PC-9 (cell line): ENCODE measurements at regions of chr1 and their contacts with region 1.

Region 1: DNA sequence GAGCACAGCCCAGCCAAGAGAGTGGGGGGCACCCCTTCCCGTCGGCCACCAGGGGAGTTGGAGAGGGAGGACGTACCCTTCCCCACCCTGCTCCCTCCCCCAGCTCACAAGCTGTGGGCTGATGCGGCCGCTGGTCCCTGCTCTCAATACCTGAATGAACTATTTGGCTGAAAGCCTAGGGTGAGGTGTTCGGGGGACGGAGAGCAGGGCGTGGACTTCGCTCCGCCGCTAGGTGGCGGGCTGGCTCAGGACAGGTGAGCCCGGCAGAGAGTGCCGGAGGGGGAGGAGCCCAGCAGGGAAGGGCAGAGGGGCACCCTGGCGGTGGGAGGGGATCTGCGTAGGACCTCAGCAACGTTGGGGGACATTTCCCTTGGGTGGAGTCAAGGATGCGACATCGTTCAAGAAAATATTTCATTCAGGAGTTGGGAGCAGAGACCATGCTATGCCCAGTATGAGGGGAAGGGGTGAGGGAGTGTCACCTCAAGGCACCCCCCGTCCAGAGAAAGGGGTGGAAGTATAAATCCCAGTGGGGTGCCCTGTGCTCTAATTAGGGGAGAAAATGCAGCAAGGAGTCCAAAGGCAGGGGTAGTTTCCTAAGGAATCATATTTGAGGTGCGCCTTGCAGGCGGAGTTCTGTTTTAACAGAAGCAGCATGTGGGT is 12.0 kb upstream of the RHBG start:
- DNase-seq: peak; percentile 75
- H3K4me3 ChIP-seq: peak overlapping the region; percentile 25; the same call in 1 of the 2 replicates
- H3K27ac ChIP-seq: no peak overlapping the region
- H3K4me1 ChIP-seq: peaks cover 20% of the 10 kb centered on the region
- H3K27me3 ChIP-seq: no peaks in the 10 kb centered on the region
- CTCF ChIP-seq: peak; percentile 88

Region 2: GRCh38 chr1:156379420-156380165 is 22.6 kb after region 1 on chr1:
- CTCF ChIA-PET with region 1: interaction called, 4 read pairs
- POLR2A ChIA-PET with region 1: no interaction called
- intact Hi-C with region 1: loop called (anchors 2 kb)
- DNase-seq: no peak
- H3K4me3 ChIP-seq: no peak overlapping the region
- H3K27ac ChIP-seq: no peak overlapping the region
- H3K4me1 ChIP-seq: peaks cover 21% of the 10 kb centered on the region
- H3K27me3 ChIP-seq: no peaks in the 10 kb centered on the region
- CTCF ChIP-seq: no peak

Region 3: GRCh38 chr1:156445789-156446263 is 88.8 kb after region 1 on chr1:
- CTCF ChIA-PET with region 1: no interaction called
- POLR2A ChIA-PET with region 1: no interaction called
- intact Hi-C with region 1: loop called (anchors 1 kb)
- DNase-seq: peak; percentile 68 to 88
- H3K4me3 ChIP-seq: no peak overlapping the region
- H3K27ac ChIP-seq: no peak overlapping the region
- H3K4me1 ChIP-seq: no peaks in the 10 kb centered on the region
- H3K27me3 ChIP-seq: peaks cover 8% of the 10 kb centered on the region
- CTCF ChIP-seq: peak; percentile 98

Region 4: DNA sequence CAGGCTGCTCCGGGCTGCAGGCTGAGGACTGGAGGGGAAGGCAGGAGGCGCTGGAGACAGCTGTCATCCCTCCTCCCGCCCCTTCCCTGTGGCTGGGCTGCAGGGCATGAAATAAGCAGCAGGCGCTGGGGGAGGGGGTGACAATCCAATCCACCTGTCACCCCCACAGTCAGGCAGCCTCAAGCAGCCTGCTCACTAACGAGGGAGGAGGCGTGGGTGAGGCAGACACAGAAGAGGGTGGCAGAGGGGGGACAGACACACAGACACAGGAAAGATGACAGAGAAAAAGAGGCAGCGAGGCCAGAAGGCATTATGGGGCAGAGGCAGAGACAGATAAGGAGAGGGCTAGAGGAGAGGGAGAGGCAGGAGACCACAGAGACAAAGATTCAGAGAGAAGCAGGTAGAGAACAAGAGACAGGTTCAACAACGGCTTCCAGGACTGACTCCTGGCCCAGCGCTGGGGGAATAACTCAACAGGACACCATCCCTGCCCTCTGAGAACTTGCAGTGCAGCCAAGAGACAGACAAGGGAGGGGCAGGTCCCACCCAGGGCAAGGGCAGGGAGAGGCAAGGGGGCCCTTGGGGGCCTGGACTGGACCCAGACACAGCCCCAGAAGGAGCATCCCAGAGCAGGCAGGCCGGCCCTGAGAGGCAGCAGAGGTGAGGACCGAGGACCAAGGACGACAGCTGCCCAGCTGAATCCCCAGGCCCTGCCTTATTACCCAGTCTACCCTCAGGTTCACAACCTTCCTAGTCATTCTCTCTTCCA is 132.3 kb after region 1 on chr1:
- CTCF ChIA-PET with region 1: no interaction called
- POLR2A ChIA-PET with region 1: no interaction called
- intact Hi-C with region 1: no loop called
- DNase-seq: no peak
- H3K4me3 ChIP-seq: no peak overlapping the region
- H3K27ac ChIP-seq: peak overlapping the region; percentile 16
- H3K4me1 ChIP-seq: peaks cover 42% of the 10 kb centered on the region
- H3K27me3 ChIP-seq: no peaks in the 10 kb centered on the region
- CTCF ChIP-seq: no peak

Region 5: GRCh38 chr1:156608036-156608674 is 251.2 kb after region 1 on chr1:
- CTCF ChIA-PET with region 1: no interaction called
- POLR2A ChIA-PET with region 1: no interaction called
- intact Hi-C with region 1: loop called (anchors 2 kb)
- DNase-seq: peak; percentile 43 to 62
- H3K4me3 ChIP-seq: no peak overlapping the region; the same call in 1 of the 2 replicates
- H3K27ac ChIP-seq: no peak overlapping the region
- H3K4me1 ChIP-seq: peaks cover 18% of the 10 kb centered on the region; the same call in 1 of the 2 replicates
- H3K27me3 ChIP-seq: peaks cover 16% of the 10 kb centered on the region; the same call in 1 of the 2 replicates
- CTCF ChIP-seq: peak; percentile 84

Region 6: DNA sequence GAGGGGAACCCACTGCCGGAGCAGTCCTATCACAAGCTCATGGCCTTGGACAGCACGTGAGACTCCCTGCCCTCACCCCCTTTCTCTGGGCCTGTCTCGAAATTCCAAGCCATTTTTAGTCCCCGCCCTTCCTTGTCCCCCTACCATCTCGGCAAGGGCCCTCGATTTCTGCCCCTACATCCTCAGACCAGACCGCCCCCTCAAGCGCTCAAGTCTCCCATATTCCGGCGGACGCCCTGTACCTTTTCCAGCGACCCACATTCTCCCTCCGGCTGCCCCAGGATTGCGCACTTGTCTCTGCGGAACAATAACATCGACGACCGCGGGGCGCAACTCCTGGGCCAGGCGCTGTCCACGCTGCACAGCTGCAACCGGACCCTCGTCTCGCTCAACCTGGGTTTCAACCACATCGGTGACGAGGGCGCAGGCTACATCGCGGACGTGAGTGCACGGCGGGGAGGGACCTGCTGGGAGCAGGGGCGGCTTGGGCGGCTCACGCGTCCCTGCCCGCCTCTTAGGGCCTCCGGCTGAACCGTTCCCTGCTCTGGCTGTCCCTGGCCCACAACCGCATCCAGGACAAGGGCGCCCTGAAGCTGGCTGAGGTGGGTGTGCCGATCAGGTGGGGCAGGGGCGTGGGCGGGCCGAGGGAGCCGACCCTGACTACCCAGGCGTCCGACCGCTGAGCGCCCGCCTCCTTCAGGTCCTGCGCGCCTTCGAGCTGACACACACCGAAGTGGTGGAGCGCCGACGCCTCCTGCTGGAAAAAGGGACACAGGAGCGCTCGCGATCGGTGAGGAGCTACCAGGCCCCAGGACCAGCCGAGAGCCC is 570.4 kb after region 1 on chr1:
- CTCF ChIA-PET with region 1: no interaction called
- POLR2A ChIA-PET with region 1: no interaction called
- intact Hi-C with region 1: no loop called
- DNase-seq: peak; percentile 68 to 79
- H3K4me3 ChIP-seq: peak overlapping the region; percentile 64
- H3K27ac ChIP-seq: no peak overlapping the region
- H3K4me1 ChIP-seq: peaks cover 30% of the 10 kb centered on the region
- H3K27me3 ChIP-seq: no peaks in the 10 kb centered on the region
- CTCF ChIP-seq: peak; percentile 77